GM10248 (cell line): ENCODE measurements at regions of chr7 and their contacts with region 1.

Region 1: GRCh38 chr7:48109848-48110663 is 21.0 kb downstream of the UPP1 start:
- DNase-seq: peak; percentile 82
- CTCF ChIP-seq: peak; percentile 98

Region 2: GRCh38 chr7:47968847-47969774 is 140.9 kb before region 1 on chr7:
- CTCF ChIA-PET with region 1: interaction called, 12 read pairs
- POLR2A ChIA-PET with region 1: no interaction called
- DNase-seq: peak; percentile 73
- CTCF ChIP-seq: peak; percentile 79

Region 3: DNA sequence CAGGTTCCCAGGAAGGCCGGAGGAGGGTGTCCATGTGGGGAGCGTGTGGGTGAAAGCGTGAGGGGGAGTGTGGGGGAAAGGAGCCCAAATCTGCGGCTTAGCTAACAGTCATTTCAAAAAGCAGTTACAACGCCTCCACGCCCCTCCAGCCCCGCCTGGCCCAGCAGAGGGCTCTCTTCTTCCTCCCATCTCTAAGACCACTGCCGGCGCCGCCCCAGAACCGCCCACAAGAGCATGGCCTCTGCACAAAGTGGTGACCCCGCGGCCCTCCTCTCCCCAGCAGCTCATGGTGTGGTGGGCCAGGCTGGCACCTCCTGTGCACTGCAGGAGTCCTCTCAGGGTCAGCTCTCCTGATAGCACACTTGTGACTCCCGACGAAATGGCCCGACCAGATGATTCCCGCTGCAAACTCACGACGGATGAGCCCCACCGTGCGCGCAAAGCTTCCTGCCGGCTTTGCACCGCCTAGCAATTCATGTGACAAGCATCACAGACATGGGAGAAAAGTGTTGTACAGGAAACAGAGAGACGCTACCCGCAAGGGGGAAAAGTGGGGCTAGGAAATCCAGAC is 118.2 kb before region 1 on chr7:
- CTCF ChIA-PET with region 1: interaction called, 88 read pairs
- POLR2A ChIA-PET with region 1: interaction called, 3 read pairs
- DNase-seq: peak; percentile 92
- CTCF ChIP-seq: peak; percentile 80

Region 4: DNA sequence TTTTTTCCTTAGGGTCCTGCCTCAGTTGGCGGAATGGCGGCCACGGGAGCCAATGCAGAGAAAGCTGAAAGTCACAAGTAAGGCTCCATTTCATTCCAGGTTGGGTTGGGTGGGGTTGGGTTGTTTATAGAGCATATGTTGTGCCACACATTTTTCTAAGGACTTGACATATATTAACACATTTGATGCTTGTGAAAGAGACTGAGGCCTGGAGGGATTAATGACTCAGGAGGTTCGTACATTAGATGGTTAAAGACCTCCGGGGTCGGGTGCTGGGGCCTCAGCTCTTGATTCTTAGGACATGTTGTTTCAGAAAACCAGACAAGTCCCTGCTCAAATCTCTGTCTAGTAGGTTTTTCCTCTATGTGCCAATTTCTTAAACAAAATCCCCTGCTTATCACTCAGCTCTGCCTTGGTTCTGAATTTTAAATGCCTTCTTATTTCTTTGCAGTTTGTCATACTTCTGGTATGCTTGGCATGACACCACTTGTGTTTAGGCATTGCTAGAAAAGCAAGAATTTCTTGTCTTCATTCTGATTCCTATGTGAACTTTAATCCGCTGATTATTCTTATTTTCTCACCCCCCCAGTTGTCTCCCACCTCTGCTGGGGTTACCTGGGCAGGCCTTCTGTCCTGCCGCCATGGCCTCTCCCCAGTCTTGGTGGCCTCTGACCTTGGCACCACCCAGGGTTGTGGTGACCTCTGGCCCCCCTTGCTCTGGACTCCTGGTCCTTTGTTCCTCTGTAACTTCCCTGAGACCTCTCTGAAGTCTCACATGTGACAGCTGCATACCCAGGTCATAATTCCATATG is 15.1 kb before region 1 on chr7:
- CTCF ChIA-PET with region 1: interaction called, 23 read pairs
- POLR2A ChIA-PET with region 1: no interaction called
- DNase-seq: no peak
- CTCF ChIP-seq: no peak

Region 5: GRCh38 chr7:48161407-48162125 is 51.5 kb after region 1 on chr7:
- CTCF ChIA-PET with region 1: no interaction called
- POLR2A ChIA-PET with region 1: no interaction called
- DNase-seq: no peak
- CTCF ChIP-seq: no peak